ENCODE measurements at regions of chr1 and their contacts with region 1.

Region 1: GRCh38 chr1:38834937-38835827 is 24.4 kb downstream of the RRAGC start:
- DNase-seq: peak; percentile 34
- H3K4me3 Mint-ChIP-seq: no peak overlapping the region
- H3K27ac Mint-ChIP-seq: no peak overlapping the region
- H3K4me1 Mint-ChIP-seq: peaks cover 7% of the 10 kb centered on the region
- H3K27me3 Mint-ChIP-seq: peaks cover 16% of the 10 kb centered on the region

Region 2: DNA sequence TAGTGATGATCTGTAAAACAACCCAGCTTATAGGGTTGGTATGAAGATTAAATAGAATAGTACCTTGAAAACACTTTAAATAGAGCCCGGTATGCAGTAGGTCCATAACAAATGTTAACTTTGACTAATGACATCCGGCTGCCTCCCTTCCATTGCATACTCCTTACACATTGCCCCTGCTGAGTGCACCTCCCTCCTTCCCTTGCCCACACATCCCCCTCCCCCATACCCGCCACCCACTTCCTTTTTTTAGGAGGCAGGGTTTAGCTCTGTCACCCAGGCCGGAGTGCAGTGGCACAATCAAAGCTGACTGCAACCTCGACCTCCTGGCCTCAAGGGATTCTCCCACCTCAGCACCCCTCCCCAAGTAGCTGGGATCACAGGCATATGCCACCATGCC is 1385.2 kb before region 1 on chr1:
- intact Hi-C with region 1: loop called (anchors 10 kb)
- DNase-seq: no peak
- H3K4me3 Mint-ChIP-seq: no peak overlapping the region
- H3K27ac Mint-ChIP-seq: no peak overlapping the region
- H3K4me1 Mint-ChIP-seq: peaks cover 5% of the 10 kb centered on the region
- H3K27me3 Mint-ChIP-seq: peaks cover 9% of the 10 kb centered on the region

Region 3: GRCh38 chr1:39091845-39092645 is 256.9 kb after region 1 on chr1:
- intact Hi-C with region 1: loop called (anchors 1 kb)
- DNase-seq: peak; percentile 19
- H3K4me3 Mint-ChIP-seq: no peak overlapping the region
- H3K27ac Mint-ChIP-seq: no peak overlapping the region
- H3K4me1 Mint-ChIP-seq: peaks cover 9% of the 10 kb centered on the region
- H3K27me3 Mint-ChIP-seq: peaks cover 10% of the 10 kb centered on the region